Psoas muscle (tissue), 8 donors: ENCODE measurements at regions of chr2 and their contacts with region 1.

Region 1: DNA sequence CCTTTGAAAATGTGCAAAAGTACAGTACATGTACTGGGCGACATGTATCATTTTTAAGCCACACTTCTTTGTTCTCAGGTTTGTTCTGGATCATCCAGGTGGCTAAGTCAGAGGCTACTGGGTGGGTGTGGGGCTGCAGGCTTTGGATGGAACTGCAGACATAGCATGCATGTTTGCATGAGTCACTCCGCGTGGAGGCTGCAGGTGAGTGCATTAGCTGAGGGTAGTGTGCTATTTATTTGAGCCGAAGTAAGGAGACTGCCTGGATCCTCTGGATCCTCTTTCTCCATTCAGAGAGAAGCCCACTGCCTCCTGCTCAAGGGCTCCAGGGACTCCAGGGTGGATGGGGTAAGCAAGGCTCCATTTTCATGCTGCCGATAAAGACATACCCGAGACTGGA is 9.4 kb upstream of the NEURL3 start:
- DNase-seq: no peak
- ATAC-seq: no peak
- H3K4me3 ChIP-seq: no peak overlapping the region
- H3K27ac ChIP-seq: no peak overlapping the region
- H3K4me1 ChIP-seq: peaks cover 9% of the 10 kb centered on the region
- H3K27me3 ChIP-seq: no peaks in the 10 kb centered on the region
- CTCF ChIP-seq: no peak

Region 2: DNA sequence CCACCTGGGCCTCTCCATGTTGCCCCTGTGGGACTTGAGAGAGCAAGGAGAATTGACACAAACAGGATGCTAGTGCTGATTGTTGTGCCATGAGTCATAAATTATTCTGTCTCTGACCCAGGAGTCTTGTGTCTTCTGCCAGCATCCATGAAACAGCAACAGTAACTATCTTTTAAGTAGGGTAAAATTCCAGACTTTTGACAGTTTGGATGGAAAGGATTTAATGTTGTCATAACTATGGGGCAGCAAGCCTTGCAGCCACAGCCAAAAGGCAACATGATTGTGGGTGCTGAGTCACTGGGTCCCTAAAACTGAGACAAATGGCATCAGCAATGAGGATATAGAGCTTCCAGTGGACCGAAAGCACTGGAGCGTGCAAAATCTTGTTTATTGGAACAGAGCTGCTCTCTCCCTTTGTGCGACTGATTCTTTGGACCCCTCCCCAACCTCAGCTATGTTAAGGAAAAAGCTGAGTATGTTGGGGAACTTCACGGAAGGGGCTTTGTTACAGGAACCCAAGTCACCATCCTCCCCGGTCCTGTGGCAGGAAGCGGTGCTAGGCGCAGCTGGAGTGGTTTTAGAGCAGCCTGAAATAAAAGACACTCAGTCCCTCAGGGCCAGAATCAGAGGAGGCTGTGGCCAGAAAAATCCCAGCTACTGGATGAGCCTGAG is 199.0 kb before region 1 on chr2:
- intact Hi-C with region 1: loop called in 1 of 2 experiments (anchors 10 kb)
- DNase-seq: no peak
- ATAC-seq: no peak
- H3K4me3 ChIP-seq: no peak overlapping the region
- H3K27ac ChIP-seq: no peak overlapping the region
- H3K4me1 ChIP-seq: no peaks in the 10 kb centered on the region
- H3K27me3 ChIP-seq: peaks cover 0 to 22% (median 0%) of the 10 kb centered on the region in 3 donors
- CTCF ChIP-seq: no peak

Region 3: GRCh38 chr2:96527286-96528005 is 12.9 kb after region 1 on chr2:
- intact Hi-C with region 1: loop called in 1 of 2 experiments (anchors 1 kb)
- DNase-seq: peak in 1 of 2 donors; percentile 59
- ATAC-seq: no peak
- H3K4me3 ChIP-seq: peak overlapping the region; percentile 68
- H3K27ac ChIP-seq: peak overlapping the region; percentile 81
- H3K4me1 ChIP-seq: peaks cover 34% of the 10 kb centered on the region
- H3K27me3 ChIP-seq: no peaks in the 10 kb centered on the region
- CTCF ChIP-seq: peak; percentile 26

Region 4: DNA sequence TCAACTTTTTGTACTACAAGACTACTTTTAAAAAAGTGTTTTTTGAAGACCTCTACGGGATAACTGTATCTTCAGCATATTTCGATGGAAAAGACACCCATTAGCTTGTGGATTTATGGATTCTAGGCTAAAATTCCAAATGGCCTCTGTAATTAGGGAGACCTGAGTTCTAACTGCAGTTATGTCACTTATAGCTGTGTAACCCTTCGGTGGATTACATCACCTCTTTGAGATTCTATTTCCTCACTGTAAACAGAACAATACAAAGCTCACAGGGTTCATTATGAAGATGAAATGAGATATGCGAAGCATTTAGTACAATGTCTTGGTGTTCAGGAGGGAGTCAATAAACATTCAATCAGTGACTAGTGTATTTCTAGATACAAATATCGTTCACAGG is 201.1 kb after region 1 on chr2:
- intact Hi-C with region 1: no loop called
- DNase-seq: no peak
- ATAC-seq: no peak
- H3K4me3 ChIP-seq: no peak overlapping the region
- H3K27ac ChIP-seq: no peak overlapping the region
- H3K4me1 ChIP-seq: no peaks in the 10 kb centered on the region
- H3K27me3 ChIP-seq: no peaks in the 10 kb centered on the region
- CTCF ChIP-seq: no peak